Spleen (tissue), 13 donors: ENCODE measurements at regions of chr20 and their contacts with region 1.

Region 1: GRCh38 chr20:3312940-3313682 is 74.1 kb upstream of the SLC4A11 start:
- DNase-seq: no peak
- H3K4me3 ChIP-seq: no peak overlapping the region
- H3K27ac ChIP-seq: peak overlapping the region in 6 of 8 donors; percentile 10 to 63 (median 32)
- H3K4me1 ChIP-seq: peaks cover 0 to 17% (median 3%) of the 10 kb centered on the region in 6 donors
- H3K27me3 ChIP-seq: no peaks in the 10 kb centered on the region
- CTCF ChIP-seq: no peak
- POLR2A ChIP-seq: no peak

Region 2: GRCh38 chr20:3051385-3052019 is 261.6 kb before region 1 on chr20:
- intact Hi-C with region 1: loop called (anchors 10 kb)
- DNase-seq: no peak
- H3K4me3 ChIP-seq: no peak overlapping the region
- H3K27ac ChIP-seq: no peak overlapping the region
- H3K4me1 ChIP-seq: peaks cover 7 to 18% (median 14%) of the 10 kb centered on the region in 6 donors
- H3K27me3 ChIP-seq: no peaks in the 10 kb centered on the region
- CTCF ChIP-seq: no peak
- POLR2A ChIP-seq: no peak

Region 3: DNA sequence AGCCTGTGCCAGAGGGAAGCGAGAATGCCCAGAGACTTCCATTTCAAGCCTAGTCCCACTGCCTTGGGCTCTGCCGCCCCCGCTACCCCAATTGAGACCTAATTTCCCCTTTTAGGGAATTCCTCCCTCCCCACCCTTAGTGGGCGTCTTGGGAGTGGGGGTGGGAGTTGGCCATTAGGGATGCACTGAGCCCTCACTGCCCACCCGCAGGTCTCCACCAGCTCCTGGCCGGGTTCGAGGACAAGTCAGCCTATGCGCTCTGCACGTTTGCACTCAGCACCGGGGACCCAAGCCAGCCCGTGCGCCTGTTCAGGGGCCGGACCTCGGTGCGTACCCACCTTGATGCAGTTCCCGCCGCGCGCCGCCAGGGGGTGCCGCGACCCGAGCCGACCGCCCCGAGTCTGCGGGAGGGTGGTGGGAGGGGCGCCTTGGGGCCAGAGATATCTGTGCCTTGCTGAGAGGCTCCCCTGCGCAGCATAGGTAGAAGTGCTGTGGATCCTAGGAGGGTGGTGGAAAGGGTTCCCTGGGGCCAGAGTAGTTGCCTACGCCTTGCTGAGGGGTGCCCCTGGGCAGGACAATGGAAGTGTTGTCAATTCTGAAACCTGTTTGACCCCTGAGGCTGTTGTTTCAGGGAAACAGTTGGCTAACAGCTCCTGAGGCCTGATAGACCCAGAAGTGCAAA is 94.7 kb before region 1 on chr20:
- intact Hi-C with region 1: loop called (anchors 10 kb)
- DNase-seq: peak; percentile 93
- H3K4me3 ChIP-seq: peak overlapping the region in 1 of 8 donors; percentile 31
- H3K27ac ChIP-seq: no peak overlapping the region
- H3K4me1 ChIP-seq: peaks cover 10 to 29% (median 20%) of the 10 kb centered on the region in 6 donors
- H3K27me3 ChIP-seq: no peaks in the 10 kb centered on the region
- CTCF ChIP-seq: peak; percentile 68 to 98 (median 90)
- POLR2A ChIP-seq: no peak